Heart right ventricle (tissue), 16 donors: ENCODE measurements at regions of chr2 and their contacts with region 1.

Region 1: DNA sequence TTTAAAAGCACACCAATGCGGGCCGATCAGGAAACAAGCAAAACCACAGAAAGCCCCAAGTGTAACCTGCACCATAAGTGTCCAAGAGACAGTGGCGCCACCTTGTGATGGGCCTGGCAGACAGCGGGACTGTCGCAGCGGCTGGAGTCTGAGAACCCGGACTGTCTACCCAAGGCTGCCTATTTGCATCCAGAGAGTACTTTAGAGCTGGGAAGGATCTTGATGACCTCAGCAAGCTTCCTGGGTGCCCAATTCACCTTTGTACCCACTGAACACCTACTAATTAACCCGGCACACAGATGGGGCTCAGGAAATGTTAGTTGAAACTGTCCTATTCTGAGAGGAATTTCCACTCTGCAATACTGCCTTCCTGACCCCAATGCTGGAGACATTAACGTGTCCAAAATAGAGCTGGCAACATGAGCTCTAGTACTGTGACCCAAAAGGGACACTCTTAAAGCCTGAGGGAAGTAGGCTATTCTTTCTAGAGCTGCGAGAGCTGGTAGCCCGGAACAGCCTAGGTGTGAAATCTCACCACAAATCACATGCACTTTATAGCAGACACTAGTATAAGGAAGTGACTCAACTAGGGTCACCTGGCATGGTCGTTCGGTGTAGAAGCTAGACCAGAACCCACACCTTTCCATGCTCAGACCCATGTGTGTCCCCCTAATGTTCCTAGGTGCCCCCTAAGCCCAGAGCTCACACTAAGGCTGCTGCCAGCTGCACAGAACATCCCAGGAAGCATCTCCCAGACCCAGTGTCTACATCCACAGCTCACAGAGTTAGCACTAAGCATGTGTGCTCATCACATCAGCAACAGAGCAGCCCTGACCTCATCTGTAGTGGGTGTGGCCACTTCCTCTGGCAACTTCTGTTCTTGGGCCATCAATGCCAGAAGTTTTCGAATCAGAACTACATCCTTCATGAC is 25.4 kb downstream of the POLR1A start:
- DNase-seq: peak; percentile 84 to 86
- ATAC-seq: peak; percentile 77 to 94 (median 88)
- H3K4me3 ChIP-seq: no peak overlapping the region
- H3K27ac ChIP-seq: peak overlapping the region in 1 of 10 donors; percentile 58
- H3K4me1 ChIP-seq: peaks cover 0 to 22% (median 12%) of the 10 kb centered on the region in 9 donors
- H3K27me3 ChIP-seq: no peaks in the 10 kb centered on the region
- CTCF ChIP-seq: peak; percentile 58 to 93 (median 86)

Region 2: DNA sequence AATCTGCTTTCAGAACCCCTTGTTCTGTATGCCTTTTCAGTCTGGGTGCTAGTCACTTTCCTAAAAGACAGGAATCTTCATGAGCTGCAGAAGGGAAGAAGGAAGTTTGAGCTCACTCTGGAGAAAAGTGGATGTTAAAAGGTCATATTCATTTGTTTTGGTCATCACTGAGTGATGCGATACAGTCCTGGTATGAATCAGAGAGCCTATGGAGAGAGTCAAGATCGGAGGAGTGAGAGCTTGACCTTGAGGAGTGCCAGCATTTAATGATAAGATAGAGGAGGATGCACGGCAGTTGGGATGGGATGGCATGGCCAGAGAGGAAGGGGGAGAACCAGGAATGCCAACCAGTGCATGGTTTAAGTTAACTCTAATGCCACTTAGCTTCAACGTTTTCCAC is 444.6 kb before region 1 on chr2:
- intact Hi-C with region 1: loop called in 1 of 10 experiments (anchors 10 kb)
- DNase-seq: no peak
- ATAC-seq: peak in 3 of 8 donors; percentile 42 to 60 (median 59)
- H3K4me3 ChIP-seq: no peak overlapping the region
- H3K27ac ChIP-seq: peak overlapping the region in 1 of 10 donors; percentile 4
- H3K4me1 ChIP-seq: peaks cover 0 to 14% (median 0%) of the 10 kb centered on the region in 9 donors
- H3K27me3 ChIP-seq: no peaks in the 10 kb centered on the region
- CTCF ChIP-seq: no peak

Region 3: GRCh38 chr2:85728883-85729824 is 351.1 kb before region 1 on chr2:
- intact Hi-C with region 1: loop called in 4 of 10 experiments (anchors 10 kb)
- DNase-seq: peak; percentile 90 to 93
- ATAC-seq: peak; percentile 92 to 97 (median 95)
- H3K4me3 ChIP-seq: no peak overlapping the region
- H3K27ac ChIP-seq: peak overlapping the region in 9 of 10 donors; percentile 3 to 72 (median 49)
- H3K4me1 ChIP-seq: peaks cover 0 to 63% (median 38%) of the 10 kb centered on the region in 9 donors
- H3K27me3 ChIP-seq: no peaks in the 10 kb centered on the region
- CTCF ChIP-seq: peak; percentile 91 to 99 (median 98)

Region 4: DNA sequence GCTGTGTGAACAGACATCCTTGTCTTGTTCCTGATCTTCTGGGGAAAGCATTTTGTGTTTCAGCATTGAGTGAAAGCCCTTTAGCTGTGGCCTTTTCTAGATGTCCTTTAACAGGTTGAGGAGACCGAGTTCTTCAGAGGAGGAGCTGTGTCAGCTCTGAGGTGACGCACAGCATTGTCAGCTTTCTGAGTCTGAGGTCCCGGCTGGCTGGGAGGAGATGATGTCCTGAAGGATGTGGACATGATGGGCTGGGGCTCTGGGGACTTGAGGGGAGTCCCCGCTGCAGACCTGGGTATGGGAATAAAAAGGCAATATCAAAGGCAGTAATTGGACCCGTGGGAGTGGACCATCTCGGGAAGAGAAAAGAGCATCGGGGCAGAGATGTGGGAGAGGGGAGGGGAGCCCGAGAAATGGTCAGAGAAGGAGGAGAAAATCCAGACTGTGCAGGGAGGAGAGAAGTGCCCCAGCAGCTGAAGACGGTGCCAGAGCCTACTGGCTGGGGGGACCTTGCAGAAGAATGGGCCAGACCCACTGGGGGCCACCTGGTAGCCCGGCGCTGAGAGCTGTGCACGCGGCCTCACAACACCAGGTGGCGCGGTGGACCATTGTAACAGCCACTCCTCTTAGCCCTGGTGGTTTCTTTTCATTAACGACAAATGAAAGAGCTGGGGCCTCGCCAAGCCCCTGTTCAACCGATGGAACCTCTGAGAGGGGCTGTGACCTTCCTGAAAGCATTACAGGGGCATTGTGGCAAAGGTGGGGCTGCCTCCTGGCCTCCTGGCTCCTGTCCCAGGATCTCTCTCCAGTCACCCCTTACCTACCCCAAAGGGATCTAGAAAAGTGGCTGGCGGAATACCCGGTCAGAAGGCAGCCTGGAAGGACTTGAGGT is 253.0 kb before region 1 on chr2:
- intact Hi-C with region 1: loop called (anchors 1 to 2 kb)
- DNase-seq: peak; percentile 73 to 80
- ATAC-seq: peak; percentile 88 to 97 (median 93)
- H3K4me3 ChIP-seq: peak overlapping the region in 2 of 10 donors; percentile 22 to 31
- H3K27ac ChIP-seq: peak overlapping the region in 1 of 10 donors; percentile 22
- H3K4me1 ChIP-seq: peaks cover 0 to 12% (median 8%) of the 10 kb centered on the region in 9 donors
- H3K27me3 ChIP-seq: peaks cover 0 to 6% (median 0%) of the 10 kb centered on the region in 7 donors
- CTCF ChIP-seq: peak; percentile 83 to 95 (median 94)

Region 5: GRCh38 chr2:85999061-85999831 is 81.0 kb before region 1 on chr2:
- intact Hi-C with region 1: loop called in 1 of 10 experiments (anchors 10 kb)
- DNase-seq: no peak
- ATAC-seq: peak in 7 of 8 donors; percentile 30 to 64 (median 52)
- H3K4me3 ChIP-seq: no peak overlapping the region
- H3K27ac ChIP-seq: peak overlapping the region; percentile 46 to 88 (median 68)
- H3K4me1 ChIP-seq: peaks cover 25 to 70% (median 63%) of the 10 kb centered on the region in 9 donors
- H3K27me3 ChIP-seq: no peaks in the 10 kb centered on the region
- CTCF ChIP-seq: no peak

Region 6: DNA sequence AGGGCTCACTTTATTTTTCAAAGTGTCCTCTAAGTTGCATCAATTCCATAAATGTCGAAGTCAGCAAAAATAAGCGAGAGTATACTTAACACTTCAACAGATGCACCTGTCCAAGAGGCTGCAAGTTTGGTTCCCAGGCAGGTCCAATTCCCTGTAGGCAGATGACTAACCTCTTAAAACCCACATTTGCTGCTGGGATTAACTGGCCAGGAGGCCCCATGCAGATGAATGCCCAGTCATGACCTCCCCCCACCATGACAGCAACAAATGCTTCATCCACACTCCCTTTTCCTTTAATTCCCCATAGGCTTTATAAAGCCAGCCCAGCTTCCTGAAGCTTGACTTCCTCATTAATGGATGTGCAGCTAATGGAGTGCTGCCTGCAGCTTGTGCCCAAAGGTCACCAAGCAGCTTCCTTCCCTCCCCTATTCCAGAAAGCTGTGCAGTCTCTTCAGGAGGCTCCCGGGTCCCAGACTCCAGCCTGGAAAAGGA is 221.5 kb after region 1 on chr2:
- intact Hi-C with region 1: no loop called
- DNase-seq: no peak
- ATAC-seq: peak in 3 of 8 donors; percentile 4 to 12 (median 8)
- H3K4me3 ChIP-seq: no peak overlapping the region
- H3K27ac ChIP-seq: peak overlapping the region in 4 of 10 donors; percentile 10 to 45 (median 20)
- H3K4me1 ChIP-seq: peaks cover 9 to 60% (median 40%) of the 10 kb centered on the region in 9 donors
- H3K27me3 ChIP-seq: no peaks in the 10 kb centered on the region
- CTCF ChIP-seq: no peak